GM23248 (cell line): ENCODE measurements at regions of chr6 and their contacts with region 1.

Region 1: DNA sequence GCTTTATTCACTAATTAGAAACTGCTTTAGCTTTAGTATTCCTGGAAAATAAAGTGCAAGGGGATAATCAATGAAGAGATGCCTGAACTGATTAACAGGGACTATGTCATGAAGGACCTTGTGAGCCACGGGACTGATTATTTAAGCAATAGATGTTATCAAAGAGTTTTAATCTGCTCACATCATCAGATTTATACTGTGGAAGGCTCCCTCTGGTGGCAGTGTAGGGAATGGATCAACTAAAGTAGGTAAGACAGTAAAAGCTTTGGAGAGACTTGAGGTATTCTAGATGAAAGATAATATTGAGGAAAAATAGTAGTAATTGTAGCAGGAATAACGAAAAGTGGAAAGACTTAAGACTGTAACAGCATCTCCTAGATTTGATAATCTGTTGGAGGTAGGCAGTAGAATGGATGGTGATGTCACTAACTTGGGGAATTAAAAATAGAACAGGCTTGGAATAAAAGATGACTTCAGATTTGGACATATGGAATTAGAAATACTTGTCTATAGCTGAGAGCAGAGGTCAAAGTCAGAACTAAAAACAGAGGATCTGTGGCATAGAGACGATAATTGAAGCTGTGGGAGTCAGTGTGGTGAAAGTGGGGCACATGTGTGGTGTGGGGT is 80.3 kb upstream of the HTR1E start:
- DNase-seq: peak; percentile 60
- H3K4me3 ChIP-seq: no peak overlapping the region
- H3K27ac ChIP-seq: no peak overlapping the region
- H3K4me1 ChIP-seq: no peaks in the 10 kb centered on the region
- H3K27me3 ChIP-seq: 0 out of 2 replicates have a peak, but pooled peaks cover 3% of the 10 kb centered on the region

Region 2: DNA sequence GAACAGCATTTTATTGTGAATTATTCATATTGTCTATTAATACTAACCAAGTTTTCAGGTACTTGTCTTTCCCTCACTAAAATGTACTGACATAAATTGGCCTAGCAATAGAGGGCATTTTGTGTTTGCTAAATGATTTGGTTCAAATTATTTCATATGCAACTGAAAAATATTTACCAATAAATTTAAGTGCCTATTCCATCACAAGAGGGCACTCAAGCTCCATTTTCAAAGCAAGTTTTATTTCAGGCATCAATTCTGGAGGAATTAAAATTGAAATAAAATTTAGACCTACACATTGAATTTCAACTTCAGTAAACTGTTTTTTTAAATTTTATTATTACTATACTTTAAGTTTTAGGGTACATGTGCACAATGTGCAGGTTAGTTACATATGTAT is 1100.1 kb before region 1 on chr6:
- in situ Hi-C with region 1: loop called (anchors 25 kb)
- DNase-seq: peak; percentile 58
- H3K4me3 ChIP-seq: no peak overlapping the region
- H3K27ac ChIP-seq: no peak overlapping the region
- H3K4me1 ChIP-seq: no peaks in the 10 kb centered on the region
- H3K27me3 ChIP-seq: no peaks in the 10 kb centered on the region

Region 3: DNA sequence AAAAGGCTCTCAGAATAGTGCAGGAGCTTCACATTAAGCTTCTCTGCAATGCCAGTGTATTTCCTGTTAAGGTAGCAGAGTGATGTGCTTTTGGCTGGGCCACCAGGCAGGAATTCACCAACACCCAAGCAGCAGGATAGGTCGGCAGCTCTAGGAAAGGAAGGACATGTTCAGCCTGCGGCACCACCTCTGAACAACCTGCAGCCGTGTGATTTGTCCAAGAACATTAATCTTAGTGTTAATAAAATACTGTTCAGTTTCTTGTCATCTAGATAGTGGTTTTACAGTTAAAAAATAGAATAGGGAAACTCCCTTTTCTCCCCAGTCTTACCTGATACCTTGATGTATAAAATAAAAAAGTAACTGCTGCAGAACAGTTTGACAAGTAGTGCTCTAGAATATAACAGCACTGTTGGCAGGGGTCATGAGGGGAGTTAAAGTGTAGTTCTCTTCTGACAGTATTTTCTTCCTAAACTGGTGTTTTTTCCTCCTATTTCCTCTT is 317.1 kb after region 1 on chr6:
- in situ Hi-C with region 1: no loop called
- DNase-seq: no peak
- H3K4me3 ChIP-seq: no peak overlapping the region
- H3K27ac ChIP-seq: no peak overlapping the region
- H3K4me1 ChIP-seq: peaks cover 13% of the 10 kb centered on the region
- H3K27me3 ChIP-seq: no peaks in the 10 kb centered on the region